ENCODE measurements at regions of chr4 and their contacts with region 1.

Region 1: DNA sequence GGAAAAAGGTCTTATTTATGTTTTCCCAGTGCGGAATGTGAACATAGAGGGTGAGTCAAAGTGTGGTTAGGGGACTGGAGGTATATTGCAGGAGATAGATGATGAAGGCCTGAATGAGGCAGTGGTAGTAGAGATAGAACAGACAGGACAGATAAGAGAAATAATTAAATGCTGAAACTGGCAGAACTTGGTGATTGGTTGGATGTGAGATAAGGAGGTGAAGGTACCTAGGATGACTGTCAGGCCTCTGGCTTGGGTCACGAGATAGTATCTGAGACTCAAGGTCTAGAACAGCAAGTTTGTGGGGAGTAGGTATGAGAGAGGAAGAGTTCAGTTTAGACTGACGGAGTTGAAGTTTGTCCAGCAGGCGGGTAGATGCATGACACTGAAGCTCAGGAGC is 3.5 kb downstream of the MND1 start:
- DNase-seq: no peak
- H3K27ac ChIP-seq: no peak overlapping the region
- CTCF ChIP-seq: no peak

Region 2: GRCh38 chr4:153771046-153771445 is 423.0 kb after region 1 on chr4:
- CTCF ChIA-PET with region 1: no interaction called
- POLR2A ChIA-PET with region 1: interaction called, 11 read pairs
- DNase-seq: no peak
- H3K27ac ChIP-seq: no peak overlapping the region
- CTCF ChIP-seq: no peak